ENCODE measurements at regions of chr1 and their contacts with region 1.

Region 1: GRCh38 chr1:174262349-174263241 is 103.3 kb downstream of the RABGAP1L start:
- DNase-seq: peak; percentile 68

Region 2: DNA sequence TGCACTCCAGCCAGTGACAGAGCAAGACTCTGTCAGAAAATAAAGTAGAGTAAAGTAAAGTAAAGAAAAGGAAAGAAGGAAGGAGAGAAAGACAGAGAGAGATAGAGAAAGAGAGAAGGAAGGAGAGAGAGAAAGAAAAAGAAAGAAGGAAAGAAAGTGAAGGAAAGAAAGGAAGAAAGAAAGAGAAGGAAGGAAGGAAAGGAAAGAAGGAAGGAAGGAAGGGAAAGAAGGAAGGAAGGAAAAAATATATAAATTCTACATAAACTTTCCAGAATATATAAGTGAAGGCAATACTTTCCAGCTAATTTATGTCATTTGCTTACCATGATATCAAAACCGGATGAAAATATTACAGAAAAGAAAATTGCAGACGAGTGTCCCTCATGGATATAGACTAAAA is 113.4 kb after region 1 on chr1:
- in situ Hi-C with region 1: no loop called
- DNase-seq: no peak

Region 3: GRCh38 chr1:174743654-174744561 is 481.3 kb after region 1 on chr1:
- in situ Hi-C with region 1: loop called (anchors 25 kb)
- DNase-seq: peak; percentile 62

Measured in ACHN (cell line).